Mammary epithelial cell (primary cell): ENCODE measurements at regions of chr11 and their contacts with region 1.

Region 1: GRCh38 chr11:47285969-47286770 is 16.2 kb downstream of the MADD start:
- DNase-seq: no peak
- H3K4me3 ChIP-seq: no peak overlapping the region
- H3K27ac ChIP-seq: no peak overlapping the region
- H3K4me1 ChIP-seq: no peaks in the 10 kb centered on the region
- H3K27me3 ChIP-seq: no peaks in the 10 kb centered on the region
- CTCF ChIP-seq: no peak

Region 2: GRCh38 chr11:47204637-47204989 is 81.6 kb before region 1 on chr11:
- CTCF ChIA-PET with region 1: no interaction called
- dilution Hi-C with region 1: loop called (anchors 5 kb)
- in situ Hi-C with region 1: no loop called
- intact Hi-C with region 1: no loop called
- DNase-seq: peak; percentile 74
- H3K4me3 ChIP-seq: no peak overlapping the region
- H3K27ac ChIP-seq: peak overlapping the region; percentile 52
- H3K4me1 ChIP-seq: peaks cover 16% of the 10 kb centered on the region
- H3K27me3 ChIP-seq: no peaks in the 10 kb centered on the region
- CTCF ChIP-seq: no peak

Region 3: GRCh38 chr11:47361419-47361818 is 75.2 kb after region 1 on chr11:
- CTCF ChIA-PET with region 1: no interaction called
- dilution Hi-C with region 1: no loop called
- in situ Hi-C with region 1: no loop called
- intact Hi-C with region 1: no loop called
- DNase-seq: no peak
- H3K4me3 ChIP-seq: no peak overlapping the region
- H3K27ac ChIP-seq: no peak overlapping the region
- H3K4me1 ChIP-seq: peaks cover 5% of the 10 kb centered on the region
- H3K27me3 ChIP-seq: no peaks in the 10 kb centered on the region
- CTCF ChIP-seq: no peak

Region 4: DNA sequence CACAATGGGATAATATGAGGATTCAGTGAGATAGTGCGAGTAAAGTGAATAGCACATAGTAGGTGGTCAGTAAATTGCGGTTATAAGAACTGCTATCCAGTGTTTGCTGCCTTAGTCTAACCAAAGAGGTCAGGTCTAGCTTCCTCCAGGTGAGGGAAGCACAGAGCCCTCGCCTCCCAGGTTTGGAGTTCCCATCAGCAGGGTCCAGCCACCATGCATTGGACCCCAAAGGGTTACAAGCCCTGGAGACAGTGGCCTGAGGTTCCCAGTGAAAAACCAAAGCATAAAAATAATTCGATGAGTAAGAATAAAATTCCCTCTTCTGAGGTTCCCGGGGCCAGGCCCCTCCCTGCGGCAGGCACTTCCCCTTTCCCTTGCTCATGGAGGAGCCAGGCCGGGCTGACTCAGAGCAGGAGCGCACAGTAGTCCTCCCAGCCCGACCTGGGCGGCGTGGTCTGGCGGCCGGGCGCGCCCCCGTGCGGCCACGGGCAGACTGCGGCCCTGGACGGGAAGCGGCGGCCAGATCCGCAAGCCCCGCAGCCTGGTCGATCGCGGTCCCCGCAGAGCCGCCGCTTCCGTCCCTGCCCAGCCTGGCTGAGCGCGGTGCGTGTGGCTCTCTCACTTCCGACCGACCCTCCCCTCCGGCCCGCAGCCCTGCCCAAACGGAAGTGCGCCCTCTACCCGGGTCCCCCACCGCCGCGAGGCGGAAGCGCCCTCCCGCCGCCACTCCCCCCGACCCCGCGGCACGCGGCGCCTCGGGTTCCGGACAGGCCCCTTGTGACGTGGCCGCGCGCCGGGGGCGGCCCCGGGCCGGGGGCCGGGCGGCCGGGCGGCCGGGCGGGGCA is 121.8 kb after region 1 on chr11 and contains the start of gene SLC39A13:
- CTCF ChIA-PET with region 1: no interaction called
- dilution Hi-C with region 1: no loop called
- in situ Hi-C with region 1: no loop called
- intact Hi-C with region 1: no loop called
- DNase-seq: peak; percentile 96
- H3K4me3 ChIP-seq: peak within 1 kb of the TSS; percentile 68 to 79 (median 70)
- H3K27ac ChIP-seq: peak within 1 kb of the TSS; percentile 88
- H3K4me1 ChIP-seq: peaks cover 30% of the 10 kb centered on the region
- H3K27me3 ChIP-seq: no peaks in the 10 kb centered on the region
- CTCF ChIP-seq: peak; percentile 61 to 72
- total RNA-seq, gene SLC39A13: 55.5 to 97.2 TPM